ENCODE measurements at regions of chr13 and their contacts with region 1.

Region 1: DNA sequence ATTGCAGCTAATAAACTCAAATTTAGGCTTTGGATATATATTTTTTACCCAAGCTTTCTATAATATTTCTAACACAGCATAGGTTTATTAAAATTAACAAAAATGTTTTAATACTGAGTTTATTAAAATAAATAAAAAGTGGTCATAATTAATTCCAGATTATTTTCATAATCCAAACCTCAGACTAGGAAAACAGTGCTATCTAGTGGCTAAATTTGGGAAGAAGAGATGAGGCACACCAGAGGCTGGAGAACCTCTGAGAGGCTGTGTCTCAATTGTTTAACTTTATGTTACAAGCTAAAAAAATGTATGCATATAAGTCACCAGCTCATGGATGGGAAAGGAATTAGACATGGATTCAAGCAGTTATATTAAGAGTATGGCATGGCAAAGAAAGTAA is 392.5 kb downstream of the DIAPH3 start:
- DNase-seq: no peak
- H3K4me3 Mint-ChIP-seq: no peak overlapping the region
- H3K27ac Mint-ChIP-seq: no peak overlapping the region
- H3K4me1 Mint-ChIP-seq: peaks cover 12% of the 10 kb centered on the region
- H3K27me3 Mint-ChIP-seq: no peaks in the 10 kb centered on the region
- CTCF ChIP-seq: peak; percentile 39

Region 2: DNA sequence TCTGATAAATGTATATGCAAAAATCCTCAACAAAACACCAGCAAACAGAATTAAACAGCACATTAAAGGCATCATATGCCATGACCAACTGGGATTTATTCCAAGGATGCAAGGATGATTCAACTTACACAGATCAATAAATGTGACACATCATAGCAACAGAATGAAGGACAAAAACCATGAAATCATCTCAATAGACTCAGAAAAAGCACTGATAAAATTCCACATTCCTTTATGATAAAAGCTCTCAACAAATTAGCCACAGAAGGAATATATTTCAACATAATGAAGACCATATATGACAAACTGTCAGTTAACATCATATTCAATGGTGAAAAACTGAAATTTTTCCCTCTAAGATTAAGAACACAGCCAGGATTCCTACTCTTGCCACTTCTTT is 299.1 kb before region 1 on chr13:
- CTCF ChIA-PET with region 1: no interaction called
- POLR2A ChIA-PET with region 1: no interaction called
- intact Hi-C with region 1: no loop called
- DNase-seq: no peak
- H3K4me3 Mint-ChIP-seq: no peak overlapping the region
- H3K27ac Mint-ChIP-seq: no peak overlapping the region
- H3K4me1 Mint-ChIP-seq: no peaks in the 10 kb centered on the region
- H3K27me3 Mint-ChIP-seq: peaks cover 43% of the 10 kb centered on the region
- CTCF ChIP-seq: no peak

Region 3: DNA sequence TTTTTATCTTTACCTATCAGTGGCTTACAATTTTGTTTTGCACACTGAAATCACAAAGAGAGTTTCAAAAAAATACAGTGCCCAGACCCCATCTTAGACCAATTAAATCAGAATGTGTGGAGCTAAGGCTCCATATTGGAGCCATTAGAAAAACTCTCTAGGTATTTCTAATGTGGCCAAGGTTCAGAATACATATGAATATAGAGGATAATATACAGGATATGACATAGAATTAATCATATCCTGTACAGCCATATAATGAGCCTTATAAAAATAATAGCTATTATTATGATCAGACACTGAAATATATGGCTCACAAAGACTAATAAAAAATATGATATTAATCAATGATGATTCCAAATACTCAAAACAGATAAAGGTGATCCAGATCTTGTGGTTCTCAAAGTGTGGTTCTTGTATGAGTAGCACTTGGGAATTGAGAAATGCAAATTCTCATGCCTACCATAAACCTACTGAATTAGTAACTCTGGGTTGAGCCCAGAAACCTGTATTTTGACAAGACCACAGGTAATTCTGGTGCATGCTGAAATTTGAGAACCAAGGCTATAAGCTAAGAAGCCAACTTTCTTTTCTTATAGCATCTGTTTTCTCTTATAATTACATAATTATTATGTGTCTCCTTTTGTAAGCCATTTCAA is 15.5 kb before region 1 on chr13:
- CTCF ChIA-PET with region 1: interaction called, 11 read pairs
- POLR2A ChIA-PET with region 1: interaction called, 3 read pairs
- intact Hi-C with region 1: no loop called
- DNase-seq: no peak
- H3K4me3 Mint-ChIP-seq: no peak overlapping the region
- H3K27ac Mint-ChIP-seq: no peak overlapping the region
- H3K4me1 Mint-ChIP-seq: peaks cover 11% of the 10 kb centered on the region
- H3K27me3 Mint-ChIP-seq: no peaks in the 10 kb centered on the region
- CTCF ChIP-seq: no peak

Region 4: DNA sequence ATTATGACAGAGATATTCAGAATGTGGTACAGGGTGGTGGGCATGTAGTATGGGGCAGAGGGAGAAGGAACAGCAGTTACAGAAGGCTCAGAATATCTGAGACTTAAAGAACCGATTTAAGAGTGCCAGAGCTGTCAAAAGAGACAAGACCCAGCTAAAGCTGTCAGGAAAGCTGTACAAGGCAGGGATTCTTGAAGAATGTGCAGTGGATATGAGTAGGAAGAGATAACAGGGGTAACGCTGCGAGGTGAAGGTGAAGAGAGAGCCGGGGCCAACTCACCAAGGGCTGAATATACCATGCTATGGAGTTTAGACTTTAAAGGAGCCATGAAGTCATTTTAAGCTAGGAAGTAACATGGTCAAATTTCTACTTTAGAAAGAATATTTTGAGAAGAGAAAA is 11.4 kb after region 1 on chr13:
- CTCF ChIA-PET with region 1: interaction called, 17 read pairs
- POLR2A ChIA-PET with region 1: no interaction called
- intact Hi-C with region 1: no loop called
- DNase-seq: no peak
- H3K4me3 Mint-ChIP-seq: no peak overlapping the region
- H3K27ac Mint-ChIP-seq: no peak overlapping the region
- H3K4me1 Mint-ChIP-seq: peaks cover 15% of the 10 kb centered on the region
- H3K27me3 Mint-ChIP-seq: no peaks in the 10 kb centered on the region
- CTCF ChIP-seq: no peak

Region 5: DNA sequence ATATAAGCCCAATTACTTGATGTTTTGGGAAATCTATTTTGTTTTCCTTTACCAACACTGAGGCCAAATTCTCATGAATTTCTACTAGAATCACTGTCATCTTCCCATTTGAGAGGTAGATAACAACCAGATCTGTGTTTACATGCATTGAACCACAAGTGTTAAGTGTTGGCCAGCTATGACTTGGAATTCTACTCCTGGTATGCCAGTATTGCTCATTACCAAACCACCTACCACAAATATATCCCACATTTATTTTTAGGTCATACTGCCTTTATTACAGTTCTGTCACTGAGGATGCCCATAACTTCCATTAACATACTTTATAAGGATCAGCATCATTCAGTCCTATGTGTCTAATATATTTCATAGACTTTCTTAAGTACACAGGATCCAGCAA is 63.5 kb after region 1 on chr13:
- CTCF ChIA-PET with region 1: no interaction called
- POLR2A ChIA-PET with region 1: no interaction called
- intact Hi-C with region 1: no loop called
- DNase-seq: no peak
- H3K4me3 Mint-ChIP-seq: no peak overlapping the region
- H3K27ac Mint-ChIP-seq: no peak overlapping the region
- H3K4me1 Mint-ChIP-seq: no peaks in the 10 kb centered on the region
- H3K27me3 Mint-ChIP-seq: no peaks in the 10 kb centered on the region
- CTCF ChIP-seq: no peak

Region 6: GRCh38 chr13:60335531-60335930 is 564.3 kb after region 1 on chr13:
- CTCF ChIA-PET with region 1: interaction called, 5 read pairs
- POLR2A ChIA-PET with region 1: no interaction called
- intact Hi-C with region 1: loop called (anchors 5 kb)
- DNase-seq: peak; percentile 16
- H3K4me3 Mint-ChIP-seq: no peak overlapping the region
- H3K27ac Mint-ChIP-seq: no peak overlapping the region
- H3K4me1 Mint-ChIP-seq: peaks cover 5% of the 10 kb centered on the region
- H3K27me3 Mint-ChIP-seq: peaks cover 76% of the 10 kb centered on the region
- CTCF ChIP-seq: peak; percentile 41

Measured in MCF 10A (cell line).